CD4-positive, alpha-beta memory T cell (primary cell): ENCODE measurements at regions of chr17 and their contacts with region 1.

Region 1: GRCh38 chr17:81512560-81513371 is at the start of gene ACTG1:
- DNase-seq: peak; percentile 90 to 93 (median 91)
- H3K4me3 ChIP-seq: peak within 1 kb of the TSS; percentile 95 to 97
- H3K4me3 Mint-ChIP-seq: peak within 1 kb of the TSS; percentile 92 to 100 (median 98)
- H3K27ac ChIP-seq: peak within 1 kb of the TSS; percentile 78
- H3K27ac Mint-ChIP-seq: peak within 1 kb of the TSS; percentile 94 to 98 (median 95)
- H3K4me1 ChIP-seq: peaks cover 42% of the 10 kb centered on the region
- H3K4me1 Mint-ChIP-seq: peaks cover 20 to 68% (median 43%) of the 10 kb centered on the region in 4 donors
- H3K27me3 ChIP-seq: no peaks in the 10 kb centered on the region
- H3K27me3 Mint-ChIP-seq: no peaks in the 10 kb centered on the region
- total RNA-seq, gene ACTG1: 1,031 to 1,038 TPM

Region 2: DNA sequence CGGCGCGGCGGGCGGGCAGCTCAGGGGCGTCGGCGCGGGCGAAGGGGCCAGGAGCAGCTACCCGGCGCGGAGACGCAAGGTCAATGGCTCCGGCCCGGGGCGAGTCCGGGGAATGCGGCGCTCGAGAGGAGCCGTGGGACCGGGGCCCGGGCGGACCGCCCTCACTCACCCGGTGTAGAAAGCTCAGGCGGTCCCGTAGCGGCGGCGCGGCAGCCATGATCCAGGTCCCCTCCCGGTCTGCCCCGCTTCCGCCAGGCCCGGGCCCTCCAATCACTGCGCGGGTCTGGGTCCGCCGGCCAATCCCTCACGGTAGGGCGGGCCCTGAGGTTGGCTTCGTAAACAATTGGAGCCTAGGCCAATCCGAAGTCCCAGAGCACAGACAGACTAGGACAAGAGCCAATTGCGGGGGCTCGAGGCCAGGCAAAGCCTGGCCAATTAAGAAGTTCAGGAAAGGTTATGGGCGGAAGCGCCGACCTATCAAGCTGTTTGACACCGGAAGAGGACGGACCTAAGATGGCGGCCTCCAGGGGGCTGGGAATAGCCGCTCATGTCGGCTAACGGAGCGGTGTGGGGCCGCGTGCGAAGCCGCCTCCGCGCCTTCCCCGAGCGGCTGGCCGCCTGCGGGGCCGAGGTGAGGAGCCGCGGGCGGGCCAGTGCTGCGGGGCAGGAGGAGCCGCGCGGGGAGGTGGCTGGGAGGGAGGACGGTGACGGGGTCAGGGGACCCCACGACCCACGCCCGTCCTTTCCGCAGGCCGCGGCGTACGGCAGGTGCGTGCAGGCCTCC is 273.8 kb before region 1 on chr17 and contains the starts of genes NDUFAF8 and TEPSIN:
- CTCF ChIA-PET with region 1: no interaction called
- POLR2A ChIA-PET with region 1: interaction called, 16 read pairs
- intact Hi-C with region 1: loop called (anchors 1 kb)
- DNase-seq: peak; percentile 95 to 99 (median 98)
- H3K4me3 ChIP-seq: peak within 1 kb of the TSS; percentile 76 to 89
- H3K4me3 Mint-ChIP-seq: peak within 1 kb of the TSS; percentile 91 to 96 (median 94)
- H3K27ac ChIP-seq: peak within 1 kb of the TSS; percentile 80
- H3K27ac Mint-ChIP-seq: peak within 1 kb of the TSS; percentile 86 to 95 (median 92)
- H3K4me1 ChIP-seq: peaks cover 37% of the 10 kb centered on the region
- H3K4me1 Mint-ChIP-seq: peaks cover 13 to 42% (median 34%) of the 10 kb centered on the region in 4 donors
- H3K27me3 ChIP-seq: no peaks in the 10 kb centered on the region
- H3K27me3 Mint-ChIP-seq: no peaks in the 10 kb centered on the region
- total RNA-seq, gene NDUFAF8: 40.1 to 45.1 TPM
- total RNA-seq, gene TEPSIN: 111 to 126 TPM

Region 3: DNA sequence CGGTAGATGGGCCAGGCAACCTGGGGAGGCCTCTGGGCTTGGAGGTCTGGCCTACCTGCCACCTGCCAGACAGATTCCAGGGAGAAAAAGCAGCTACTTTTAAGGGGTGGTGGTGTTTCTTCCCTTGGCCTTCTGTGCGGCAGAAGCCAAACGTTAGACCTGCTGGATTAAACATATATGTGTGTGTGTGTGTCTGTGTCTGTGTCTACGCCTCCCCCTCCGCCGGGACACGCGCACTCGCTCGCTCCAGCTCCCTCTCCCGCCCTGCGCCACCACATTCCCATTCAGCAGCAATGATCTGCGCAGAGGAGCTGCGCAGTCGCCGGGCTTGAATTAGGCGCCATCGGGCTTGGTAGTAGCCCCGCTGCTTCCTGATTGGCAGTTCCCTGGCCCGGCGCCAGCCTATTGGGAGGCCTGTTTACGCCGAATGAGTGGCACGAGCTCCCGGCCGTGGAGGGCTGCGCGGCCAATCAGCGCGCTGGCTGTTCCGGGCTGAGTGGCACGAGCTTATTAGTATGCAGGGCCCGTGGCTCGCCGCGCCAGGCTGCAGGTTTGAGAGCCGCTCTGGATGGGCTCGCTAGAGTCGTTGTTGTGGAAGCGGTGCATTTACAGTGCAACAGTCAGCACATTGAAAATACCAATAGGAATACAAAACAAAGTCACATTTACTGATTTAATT is 117.7 kb before region 1 on chr17 and contains the start of gene BAHCC1:
- CTCF ChIA-PET with region 1: no interaction called
- POLR2A ChIA-PET with region 1: interaction called, 15 read pairs
- intact Hi-C with region 1: loop called (anchors 2 kb)
- DNase-seq: peak; percentile 60 to 76 (median 68)
- H3K4me3 ChIP-seq: no peak within 1 kb of the TSS
- H3K4me3 Mint-ChIP-seq: peak within 1 kb of the TSS; percentile 45 to 82 (median 70)
- H3K27ac ChIP-seq: no peak within 1 kb of the TSS
- H3K27ac Mint-ChIP-seq: peak within 1 kb of the TSS in 6 of 7 donors; percentile 37 to 90 (median 72)
- H3K4me1 ChIP-seq: peaks cover 56% of the 10 kb centered on the region
- H3K4me1 Mint-ChIP-seq: peaks cover 10 to 39% (median 22%) of the 10 kb centered on the region in 4 donors
- H3K27me3 ChIP-seq: peaks cover 67% of the 10 kb centered on the region
- H3K27me3 Mint-ChIP-seq: peaks cover 28 to 36% of the 10 kb centered on the region in 2 donors
- total RNA-seq, gene BAHCC1: not detected

Region 4: DNA sequence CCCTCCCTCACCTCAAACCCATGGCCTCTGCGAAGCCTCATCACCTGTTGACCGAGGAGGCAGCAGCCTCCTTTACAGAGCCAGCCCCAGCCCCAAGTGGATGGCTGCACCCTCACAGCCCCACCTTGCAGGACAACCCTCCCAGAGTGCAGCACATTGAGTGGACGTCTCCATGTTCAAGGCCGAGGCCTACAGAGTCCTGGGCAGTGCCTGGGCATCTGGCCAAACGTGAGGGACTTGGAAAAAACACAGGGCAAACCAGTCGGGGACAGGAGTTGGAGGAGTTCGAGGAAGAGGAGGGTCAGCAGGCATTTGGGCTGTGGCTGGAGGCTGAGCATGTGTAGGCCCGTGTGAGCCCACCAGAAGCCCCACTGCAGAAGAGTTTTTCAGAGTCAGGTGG is 39.7 kb before region 1 on chr17:
- CTCF ChIA-PET with region 1: no interaction called
- POLR2A ChIA-PET with region 1: no interaction called
- intact Hi-C with region 1: no loop called
- DNase-seq: no peak
- H3K4me3 ChIP-seq: no peak overlapping the region
- H3K4me3 Mint-ChIP-seq: no peak overlapping the region
- H3K27ac ChIP-seq: no peak overlapping the region
- H3K27ac Mint-ChIP-seq: no peak overlapping the region
- H3K4me1 ChIP-seq: no peaks in the 10 kb centered on the region
- H3K4me1 Mint-ChIP-seq: no peaks in the 10 kb centered on the region
- H3K27me3 ChIP-seq: no peaks in the 10 kb centered on the region
- H3K27me3 Mint-ChIP-seq: peaks cover 1 to 6% of the 10 kb centered on the region in 2 donors

Region 5: DNA sequence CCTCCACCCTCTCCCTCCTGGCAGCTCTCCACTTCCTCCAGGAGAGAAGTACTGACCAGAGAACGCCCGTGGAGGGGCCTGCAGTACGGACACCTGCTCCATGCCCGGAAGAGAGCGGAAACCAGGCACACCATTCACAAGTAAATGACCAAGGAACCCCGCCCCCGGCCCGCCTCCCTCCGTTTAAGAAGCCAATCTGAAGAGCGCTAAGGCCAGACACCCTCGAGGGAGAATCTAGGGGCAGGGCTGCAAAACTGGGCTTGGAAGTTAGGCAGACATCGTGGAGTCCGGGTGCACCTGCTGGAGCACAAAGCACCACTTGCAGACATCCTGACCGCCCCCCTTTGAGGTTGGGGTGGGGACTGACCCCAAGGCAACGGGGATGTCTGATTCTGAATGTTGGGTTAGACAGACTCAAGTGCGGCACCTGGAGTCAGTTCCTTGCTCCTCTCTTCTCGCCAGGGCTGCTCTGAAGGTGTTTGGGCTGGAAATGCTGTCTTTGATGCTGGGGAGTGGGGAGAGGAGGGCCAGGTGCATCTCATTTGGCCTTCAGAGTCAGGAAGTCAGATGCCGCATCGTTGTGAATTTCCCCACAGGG is 40.4 kb after region 1 on chr17:
- CTCF ChIA-PET with region 1: interaction called, 6 read pairs
- POLR2A ChIA-PET with region 1: interaction called, 138 read pairs
- intact Hi-C with region 1: loop called (anchors 1 kb)
- DNase-seq: peak; percentile 77 to 91 (median 77)
- H3K4me3 ChIP-seq: peak overlapping the region; percentile 81
- H3K4me3 Mint-ChIP-seq: peak overlapping the region; percentile 89 to 93 (median 90)
- H3K27ac ChIP-seq: peak overlapping the region; percentile 64
- H3K27ac Mint-ChIP-seq: peak overlapping the region; percentile 91 to 97 (median 94)
- H3K4me1 ChIP-seq: peaks cover 24% of the 10 kb centered on the region
- H3K4me1 Mint-ChIP-seq: peaks cover 17 to 43% (median 28%) of the 10 kb centered on the region in 4 donors
- H3K27me3 ChIP-seq: no peaks in the 10 kb centered on the region
- H3K27me3 Mint-ChIP-seq: no peaks in the 10 kb centered on the region